H1 (cell line): ENCODE measurements at regions of chr1 and their contacts with region 1.

Region 1: DNA sequence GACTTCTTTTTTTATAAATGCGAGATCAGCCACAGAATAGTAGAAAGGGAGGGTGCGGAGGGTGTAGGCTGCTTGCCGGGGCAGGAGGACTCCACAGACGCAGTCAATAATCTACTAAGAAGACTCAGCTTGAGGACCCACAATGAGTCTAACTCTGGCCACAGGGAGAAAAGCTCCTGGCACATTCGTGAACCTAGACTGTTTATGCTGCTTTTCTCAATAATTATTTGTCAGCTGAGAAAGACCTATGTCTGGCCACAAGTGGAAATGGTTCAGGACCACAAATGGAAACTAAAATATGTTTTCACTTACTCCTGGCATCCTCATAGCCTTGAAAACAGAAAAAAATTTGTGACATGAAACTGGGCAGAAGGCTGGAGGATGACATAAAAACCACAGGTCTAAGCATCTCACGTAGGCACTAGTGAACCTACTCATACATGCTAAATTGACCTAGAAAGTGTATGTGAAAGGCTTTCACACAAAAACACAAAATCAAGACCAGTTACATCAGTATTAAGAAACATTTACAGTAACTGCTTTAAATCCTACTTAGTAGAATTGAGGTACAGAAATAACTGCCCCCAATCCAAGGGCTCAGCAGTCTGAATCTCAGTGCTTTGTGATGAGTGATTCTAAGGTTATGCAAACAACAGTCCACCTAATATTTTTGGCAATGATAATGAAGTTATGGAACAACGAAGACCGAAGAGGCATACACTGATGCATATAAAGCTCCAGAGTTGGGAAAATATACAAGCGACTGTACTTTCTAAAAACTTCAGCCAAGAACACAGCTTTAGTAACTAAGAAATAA is 159.5 kb downstream of the SLC45A1 start:
- DNase-seq: no peak
- H3K4me3 ChIP-seq: no peak overlapping the region
- H3K27ac ChIP-seq: no peak overlapping the region
- H3K4me1 ChIP-seq: peaks cover 3 to 14% (median 10%) of the 10 kb centered on the region in 4 experiments
- H3K27me3 ChIP-seq: no peaks in the 10 kb centered on the region
- CTCF ChIP-seq: no peak
- EP300 ChIP-seq: no peak
- POLR2A ChIP-seq: no peak
- RAD21 ChIP-seq: no peak

Region 2: GRCh38 chr1:8420318-8420717 is 57.1 kb before region 1 on chr1:
- CTCF ChIA-PET with region 1: no interaction called
- POLR2A ChIA-PET with region 1: no interaction called
- DNase-seq: no peak
- H3K4me3 ChIP-seq: no peak overlapping the region
- H3K27ac ChIP-seq: no peak overlapping the region
- H3K4me1 ChIP-seq: peaks cover 21 to 33% (median 27%) of the 10 kb centered on the region in 4 experiments
- H3K27me3 ChIP-seq: no peaks in the 10 kb centered on the region
- CTCF ChIP-seq: no peak
- EP300 ChIP-seq: no peak
- POLR2A ChIP-seq: no peak
- RAD21 ChIP-seq: no peak

Region 3: DNA sequence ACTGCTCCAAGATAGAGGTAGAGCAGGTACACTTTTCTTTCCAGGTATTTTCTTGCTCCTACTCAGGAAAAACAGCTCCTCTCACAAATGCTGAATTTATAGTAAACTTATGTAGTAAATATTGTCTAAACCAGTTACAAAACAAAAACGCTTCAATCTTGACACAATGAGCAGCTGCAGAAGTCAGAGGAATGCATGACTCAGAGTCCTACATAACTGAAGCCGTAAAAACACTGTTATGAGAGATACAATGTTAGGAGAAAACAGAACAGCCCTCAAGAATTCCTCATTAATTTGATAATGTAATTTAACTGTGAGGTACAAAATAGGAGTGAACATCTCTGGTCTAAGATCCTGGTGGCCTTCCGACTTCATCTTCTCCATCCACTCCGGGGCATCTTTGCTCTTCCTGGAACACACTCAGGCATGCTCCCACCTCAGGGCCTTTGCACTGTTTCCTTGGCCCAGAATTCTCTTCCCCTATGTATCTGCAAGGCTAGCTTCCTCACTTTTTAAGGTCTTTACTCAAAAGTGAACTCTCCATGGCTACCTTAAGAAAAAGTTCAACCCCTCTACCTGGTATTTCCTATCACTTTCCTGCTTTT is 21.0 kb before region 1 on chr1:
- CTCF ChIA-PET with region 1: interaction called, 10 read pairs
- POLR2A ChIA-PET with region 1: no interaction called
- DNase-seq: no peak
- H3K4me3 ChIP-seq: no peak overlapping the region
- H3K27ac ChIP-seq: no peak overlapping the region
- H3K4me1 ChIP-seq: peaks cover 3 to 22% (median 17%) of the 10 kb centered on the region in 4 experiments; a peak in 6 of 7 replicates
- H3K27me3 ChIP-seq: no peaks in the 10 kb centered on the region
- CTCF ChIP-seq: no peak
- EP300 ChIP-seq: no peak
- POLR2A ChIP-seq: no peak
- RAD21 ChIP-seq: no peak